HCT116 (cell line): ENCODE measurements at regions of chr17 and their contacts with region 1.

Region 1: GRCh38 chr17:40362696-40363110 is 1.8 kb downstream of the GJD3 start:
- DNase-seq: peak; percentile 54
- ATAC-seq: peak; percentile 90
- H3K4me3 ChIP-seq: peak overlapping the region; percentile 42 to 55
- H3K27ac ChIP-seq: peak overlapping the region; percentile 67; the same call in 1 of the 2 replicates
- H3K4me1 ChIP-seq: peaks cover 4 to 31% of the 10 kb centered on the region in 2 experiments; a peak in 3 of 4 replicates
- H3K27me3 ChIP-seq: no peaks in the 10 kb centered on the region
- CTCF ChIP-seq: peak; percentile 80 to 90 (median 87)
- POLR2A ChIP-seq: no peak
- RAD21 ChIP-seq: peak; percentile 88

Region 2: DNA sequence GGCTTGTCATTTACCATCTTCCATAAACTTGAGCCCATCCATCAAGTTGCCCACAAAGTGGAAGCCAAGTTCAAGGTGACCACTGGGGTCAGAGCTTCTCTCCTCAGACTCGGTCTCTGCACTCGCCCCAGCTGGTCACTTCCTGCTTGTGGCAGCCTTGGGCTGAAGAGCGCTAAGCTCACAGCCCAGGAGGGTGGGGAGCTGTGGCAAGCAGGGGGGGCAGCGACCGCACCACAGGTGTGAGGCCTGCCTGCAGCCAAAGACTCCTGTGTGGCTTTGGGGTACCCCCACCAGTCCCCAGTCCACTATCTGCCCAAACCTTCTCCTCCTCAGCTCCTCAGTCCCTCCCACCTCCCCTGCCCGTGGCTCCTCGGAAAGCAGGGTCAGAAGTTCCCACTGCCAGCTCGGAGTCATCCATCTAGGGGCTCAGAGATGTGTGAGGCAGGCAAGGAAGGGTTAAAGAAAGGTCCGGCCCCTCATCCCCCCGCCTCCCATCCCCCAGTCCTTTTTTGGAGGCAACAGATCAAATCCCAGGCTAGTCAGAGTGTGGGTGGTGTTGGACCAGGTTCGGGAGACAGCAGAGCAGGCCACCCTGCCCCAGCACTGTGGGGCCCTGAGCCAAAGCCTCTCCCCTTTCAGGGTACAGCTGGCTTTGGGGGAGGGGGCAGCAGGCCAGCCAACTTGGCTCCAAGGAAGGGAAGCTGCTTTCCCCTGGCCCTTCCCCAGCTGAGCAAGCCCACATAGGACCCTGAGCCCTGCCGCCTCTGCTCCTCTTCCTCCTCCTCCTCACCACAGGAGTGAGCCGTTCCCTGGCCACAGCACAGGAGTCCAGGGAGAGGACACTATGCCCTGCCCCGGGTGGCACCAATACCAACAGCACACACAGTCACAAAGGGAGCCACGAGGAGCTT is 344.2 kb before region 1 on chr17:
- CTCF ChIA-PET with region 1: no interaction called
- POLR2A ChIA-PET with region 1: no interaction called
- RAD21 ChIA-PET with region 1: no interaction called
- intact Hi-C with region 1: loop called (anchors 5 kb)
- DNase-seq: no peak
- ATAC-seq: no peak
- H3K4me3 ChIP-seq: no peak overlapping the region
- H3K27ac ChIP-seq: no peak overlapping the region
- H3K4me1 ChIP-seq: peaks cover 0 to 13% of the 10 kb centered on the region in 2 experiments; a peak in 2 of 4 replicates
- H3K27me3 ChIP-seq: no peaks in the 10 kb centered on the region
- CTCF ChIP-seq: no peak
- POLR2A ChIP-seq: no peak
- RAD21 ChIP-seq: no peak

Region 3: DNA sequence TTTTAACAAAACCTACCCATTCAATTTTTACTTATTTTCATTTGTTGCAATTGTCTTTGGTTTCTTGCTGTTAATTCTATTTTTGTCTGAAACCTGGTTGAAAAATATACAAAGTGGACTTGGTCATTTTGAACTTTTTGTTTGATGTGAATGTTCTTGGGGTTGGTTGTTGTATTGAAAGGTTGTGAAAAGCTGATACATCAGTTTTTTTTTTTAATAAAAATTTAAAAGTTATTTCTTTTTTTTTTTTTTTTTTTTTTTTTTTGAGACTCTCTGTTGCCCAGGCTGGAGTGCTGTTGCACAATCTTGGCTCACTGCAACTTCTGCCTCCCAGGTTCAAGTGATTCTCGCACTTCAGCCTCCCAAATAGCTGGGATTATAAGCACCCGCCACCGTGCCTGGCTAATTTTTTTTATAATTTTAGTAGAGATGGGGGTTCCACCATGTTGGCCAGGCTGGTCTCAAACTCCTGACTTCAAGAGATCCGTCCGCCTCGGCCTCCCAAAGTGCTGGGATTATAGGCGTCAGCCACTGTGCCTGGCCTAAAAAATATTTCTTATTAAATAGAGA is 114.7 kb before region 1 on chr17:
- CTCF ChIA-PET with region 1: no interaction called
- POLR2A ChIA-PET with region 1: no interaction called
- RAD21 ChIA-PET with region 1: no interaction called
- intact Hi-C with region 1: no loop called
- DNase-seq: no peak
- ATAC-seq: no peak
- H3K4me3 ChIP-seq: no peak overlapping the region
- H3K27ac ChIP-seq: no peak overlapping the region
- H3K4me1 ChIP-seq: peaks cover 17 to 25% of the 10 kb centered on the region in 2 experiments
- H3K27me3 ChIP-seq: no peaks in the 10 kb centered on the region
- CTCF ChIP-seq: no peak
- POLR2A ChIP-seq: no peak
- RAD21 ChIP-seq: no peak

Region 4: DNA sequence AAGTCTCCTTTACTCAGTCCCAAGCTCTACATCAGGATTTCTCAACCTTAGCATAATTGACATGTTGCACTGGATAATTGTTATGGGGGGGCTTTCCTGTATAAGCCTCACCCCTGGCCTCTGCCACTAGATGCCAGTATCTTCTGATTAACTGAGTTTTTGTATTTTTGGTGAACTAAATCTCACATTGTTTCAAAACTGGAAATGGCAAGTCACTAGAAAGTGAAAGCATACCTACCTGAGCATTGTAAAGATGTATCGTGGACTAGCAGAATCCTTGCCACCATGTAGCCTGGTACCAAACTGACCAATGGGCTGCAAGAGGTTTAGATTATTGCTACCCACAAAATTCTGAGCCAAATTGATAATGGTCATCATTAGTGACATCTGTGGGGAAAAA is 40.0 kb after region 1 on chr17:
- CTCF ChIA-PET with region 1: no interaction called
- POLR2A ChIA-PET with region 1: no interaction called
- RAD21 ChIA-PET with region 1: no interaction called
- intact Hi-C with region 1: no loop called
- DNase-seq: no peak
- ATAC-seq: no peak
- H3K4me3 ChIP-seq: no peak overlapping the region
- H3K27ac ChIP-seq: no peak overlapping the region
- H3K4me1 ChIP-seq: no peaks in the 10 kb centered on the region
- H3K27me3 ChIP-seq: no peaks in the 10 kb centered on the region
- CTCF ChIP-seq: no peak
- POLR2A ChIP-seq: no peak
- RAD21 ChIP-seq: no peak

Region 5: DNA sequence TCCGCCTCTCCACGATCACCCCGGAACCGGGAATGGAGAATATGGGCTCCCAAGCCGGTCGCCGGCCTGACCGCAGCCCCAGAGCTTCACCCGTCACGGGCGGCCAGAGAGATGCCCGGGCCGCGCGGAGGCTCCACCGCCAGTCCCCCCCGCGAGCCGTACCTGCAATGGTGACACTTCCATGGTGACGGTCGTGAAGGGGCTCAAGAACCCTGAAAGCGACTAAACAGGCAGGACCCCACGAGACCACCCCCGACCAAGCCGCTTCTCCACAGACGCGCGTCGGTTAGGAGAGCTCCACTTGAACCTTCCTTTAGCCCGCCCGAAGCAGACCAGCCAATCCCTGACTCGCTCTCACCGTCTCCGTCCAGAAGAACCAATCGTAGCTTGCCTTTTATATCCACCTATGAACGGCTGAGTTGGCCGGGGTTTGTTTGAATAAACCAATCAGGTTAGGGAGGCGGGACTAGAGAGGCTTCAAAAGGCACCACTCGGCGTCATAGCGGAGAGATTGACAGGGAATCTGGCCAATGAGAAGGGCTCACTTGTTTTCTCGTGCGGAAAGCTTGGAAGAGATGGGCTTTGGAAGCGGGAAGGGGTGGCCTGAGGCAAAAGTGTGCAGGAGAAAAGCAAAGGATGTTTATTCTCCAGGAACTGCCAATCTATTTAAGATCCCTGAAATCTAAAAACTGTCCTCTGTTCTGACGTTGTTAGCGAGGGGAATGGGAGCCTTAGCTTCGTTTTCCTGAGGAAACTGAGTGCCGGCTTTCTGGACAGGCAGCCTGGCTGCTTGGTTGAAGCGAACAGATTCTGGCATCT is 55.1 kb after region 1 on chr17 and contains the start of gene TOP2A:
- CTCF ChIA-PET with region 1: interaction called, 5 read pairs
- POLR2A ChIA-PET with region 1: no interaction called
- RAD21 ChIA-PET with region 1: no interaction called
- intact Hi-C with region 1: loop called (anchors 2 kb)
- DNase-seq: peak; percentile 100
- ATAC-seq: peak; percentile 95
- H3K4me3 ChIP-seq: peak within 1 kb of the TSS; percentile 81 to 94
- H3K27ac ChIP-seq: peak within 1 kb of the TSS; percentile 91
- H3K4me1 ChIP-seq: peaks cover 13 to 28% of the 10 kb centered on the region in 2 experiments; a peak in 3 of 4 replicates
- H3K27me3 ChIP-seq: no peaks in the 10 kb centered on the region
- CTCF ChIP-seq: no peak
- POLR2A ChIP-seq: peak; percentile 68
- RAD21 ChIP-seq: no peak
- total RNA-seq, gene TOP2A: 141 TPM

Region 6: DNA sequence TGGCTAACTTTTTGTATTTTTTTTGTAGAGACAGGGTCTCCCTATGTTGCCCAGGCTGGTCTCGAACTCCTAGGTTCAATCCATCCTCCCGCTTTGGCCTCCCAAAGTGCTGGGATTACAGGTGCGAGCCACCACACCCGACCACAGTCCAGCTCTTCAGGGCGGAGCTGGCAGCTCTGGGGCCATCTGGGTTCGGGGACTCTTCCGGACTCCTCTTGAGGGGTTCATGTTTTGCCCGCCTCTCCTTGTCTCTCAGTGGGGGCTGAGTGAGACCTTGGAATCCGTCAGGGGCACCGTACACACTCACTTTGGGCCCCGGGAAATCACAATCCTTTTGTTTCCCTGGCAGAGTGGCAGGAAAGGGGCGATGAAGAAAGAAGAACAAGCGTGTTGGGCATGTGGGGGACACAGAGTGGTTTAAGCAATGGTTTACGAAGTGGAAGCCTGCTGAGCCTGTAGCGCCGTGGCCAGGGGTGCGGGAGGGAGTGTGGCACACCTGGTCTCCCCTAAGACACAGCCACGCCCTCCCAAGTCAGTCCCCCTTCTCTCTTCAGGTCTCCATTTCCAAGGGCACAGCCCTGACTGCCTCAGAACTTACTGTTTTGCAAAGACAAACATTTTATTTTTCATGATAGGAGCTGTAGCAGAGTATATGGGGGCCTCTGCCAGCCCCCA is 112.7 kb after region 1 on chr17:
- CTCF ChIA-PET with region 1: interaction called, 11 read pairs
- POLR2A ChIA-PET with region 1: no interaction called
- RAD21 ChIA-PET with region 1: interaction called in 1 of 2 experiments, 3 read pairs
- intact Hi-C with region 1: loop called (anchors 2 kb)
- DNase-seq: no peak
- ATAC-seq: no peak; the same call in 1 of the 2 replicates
- H3K4me3 ChIP-seq: no peak overlapping the region
- H3K27ac ChIP-seq: peak overlapping the region; percentile 2; the same call in 1 of the 2 replicates
- H3K4me1 ChIP-seq: peaks cover 10 to 61% of the 10 kb centered on the region in 2 experiments; a peak in 3 of 4 replicates
- H3K27me3 ChIP-seq: no peaks in the 10 kb centered on the region
- CTCF ChIP-seq: no peak
- POLR2A ChIP-seq: no peak
- RAD21 ChIP-seq: no peak

Region 7: DNA sequence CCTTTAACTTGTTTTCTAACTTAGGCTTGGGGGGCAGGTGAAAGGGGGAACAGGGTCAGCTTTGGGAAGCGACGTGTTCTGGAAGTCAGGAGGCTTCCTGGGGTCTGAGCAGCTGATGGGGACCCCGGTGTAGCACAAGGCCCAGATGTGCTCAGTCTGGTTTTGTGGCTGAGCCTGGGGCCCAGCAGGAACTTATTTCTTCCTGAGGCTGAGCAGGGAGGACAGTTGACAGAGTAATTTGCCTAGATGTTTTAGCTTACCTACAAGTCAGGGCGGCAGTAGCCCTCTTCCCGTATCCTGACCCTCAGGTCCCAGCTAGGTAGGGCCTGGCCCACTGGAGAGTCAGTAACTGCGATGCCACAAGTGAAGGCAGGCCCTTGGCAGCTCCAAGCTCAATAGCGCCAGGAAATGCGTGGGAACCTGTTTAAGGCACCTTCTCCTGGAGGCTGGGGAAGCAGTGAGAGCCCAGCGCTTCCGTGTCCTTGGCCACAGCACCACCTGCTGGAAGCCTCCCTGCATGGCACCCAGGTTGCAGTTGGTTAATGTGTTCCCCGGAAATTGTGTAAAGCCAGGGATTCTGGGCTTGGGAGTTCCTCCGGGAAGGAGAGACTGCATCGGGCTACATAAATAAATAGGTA is 197.4 kb after region 1 on chr17:
- CTCF ChIA-PET with region 1: interaction called, 34 read pairs
- POLR2A ChIA-PET with region 1: interaction called, 6 read pairs
- RAD21 ChIA-PET with region 1: interaction called, 3 to 4 read pairs
- intact Hi-C with region 1: loop called (anchors 1 kb)
- DNase-seq: peak; percentile 79
- ATAC-seq: peak; percentile 96
- H3K4me3 ChIP-seq: peak overlapping the region; percentile 21; a peak in 2 of 4 replicates
- H3K27ac ChIP-seq: peak overlapping the region; percentile 11; the same call in 1 of the 2 replicates
- H3K4me1 ChIP-seq: peaks cover 10 to 16% of the 10 kb centered on the region in 2 experiments
- H3K27me3 ChIP-seq: no peaks in the 10 kb centered on the region
- CTCF ChIP-seq: peak; percentile 97 to 99 (median 97)
- POLR2A ChIP-seq: no peak
- RAD21 ChIP-seq: peak; percentile 99

Region 8: DNA sequence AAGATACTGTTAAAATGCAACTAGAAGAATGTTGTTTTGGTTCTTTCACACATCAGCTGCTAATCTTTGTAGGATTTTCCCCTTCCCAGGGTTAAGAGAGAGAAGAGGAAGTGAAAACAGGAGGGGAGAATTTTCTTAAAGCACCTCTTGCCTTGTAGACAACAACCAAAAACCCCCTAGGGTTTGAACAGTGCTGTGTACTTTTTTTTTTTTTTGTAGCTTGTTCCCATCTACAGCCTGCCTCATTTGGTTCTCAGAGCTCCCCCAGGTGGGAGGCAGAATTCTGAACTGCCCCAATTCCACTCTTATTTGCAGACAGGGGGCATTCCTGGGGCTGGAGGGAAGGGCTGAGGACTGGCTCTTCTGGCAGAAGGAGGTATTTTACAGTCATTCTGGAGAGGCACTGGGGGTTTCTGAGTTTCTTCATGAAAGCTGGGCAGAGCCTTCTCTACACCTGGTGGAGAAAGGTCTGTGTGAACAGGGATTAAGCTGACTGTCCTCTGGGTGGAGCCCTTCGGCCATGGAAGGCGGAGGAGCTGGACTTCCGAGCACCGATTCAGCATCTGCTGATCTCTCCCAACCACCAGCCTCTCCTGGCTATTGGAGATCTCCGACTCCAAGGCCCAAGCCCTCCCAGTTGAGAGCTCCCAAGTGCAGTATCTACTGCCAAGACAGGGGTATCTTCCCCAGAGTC is 252.7 kb after region 1 on chr17:
- CTCF ChIA-PET with region 1: interaction called, 4 read pairs
- POLR2A ChIA-PET with region 1: no interaction called
- RAD21 ChIA-PET with region 1: no interaction called
- intact Hi-C with region 1: loop called (anchors 5 kb)
- DNase-seq: peak; percentile 69
- ATAC-seq: peak; percentile 90
- H3K4me3 ChIP-seq: no peak overlapping the region
- H3K27ac ChIP-seq: no peak overlapping the region
- H3K4me1 ChIP-seq: peaks cover 1 to 17% of the 10 kb centered on the region in 2 experiments; a peak in 3 of 4 replicates
- H3K27me3 ChIP-seq: no peaks in the 10 kb centered on the region
- CTCF ChIP-seq: peak; percentile 72 to 95 (median 75)
- POLR2A ChIP-seq: no peak
- RAD21 ChIP-seq: peak; percentile 87